Mammary epithelial cell (primary cell): ENCODE measurements at regions of chr15 and their contacts with region 1.

Region 1: GRCh38 chr15:80343554-80343992 is 60.6 kb upstream of the ARNT2 start:
- DNase-seq: no peak
- H3K4me3 ChIP-seq: no peak overlapping the region
- H3K27ac ChIP-seq: no peak overlapping the region
- H3K4me1 ChIP-seq: no peaks in the 10 kb centered on the region
- H3K27me3 ChIP-seq: no peaks in the 10 kb centered on the region
- CTCF ChIP-seq: no peak

Region 2: DNA sequence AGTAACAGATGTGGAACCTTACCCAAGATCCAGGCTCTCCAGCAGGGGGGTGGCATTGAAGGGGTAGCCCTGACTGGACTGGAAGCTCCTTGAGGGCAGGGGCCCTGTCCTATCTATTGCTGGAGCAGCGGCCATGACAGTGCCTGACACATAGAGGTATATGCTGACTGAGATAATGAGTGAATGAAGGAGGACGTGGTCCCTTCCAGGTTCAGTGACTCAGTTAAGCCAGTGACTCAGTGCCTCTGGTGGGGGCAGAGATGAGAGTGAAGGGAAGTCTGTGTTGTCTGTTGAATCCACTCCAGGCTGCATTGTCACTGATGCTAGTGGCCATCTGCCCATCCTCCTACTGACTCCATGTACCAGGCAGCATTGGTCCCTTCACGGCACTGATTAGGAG is 78.6 kb before region 1 on chr15:
- CTCF ChIA-PET with region 1: no interaction called
- dilution Hi-C with region 1: loop called (anchors 5 kb)
- in situ Hi-C with region 1: no loop called
- intact Hi-C with region 1: no loop called
- DNase-seq: peak; percentile 6
- H3K4me3 ChIP-seq: no peak overlapping the region
- H3K27ac ChIP-seq: no peak overlapping the region
- H3K4me1 ChIP-seq: no peaks in the 10 kb centered on the region
- H3K27me3 ChIP-seq: no peaks in the 10 kb centered on the region
- CTCF ChIP-seq: no peak

Region 3: GRCh38 chr15:80301472-80301871 is 42.1 kb before region 1 on chr15:
- CTCF ChIA-PET with region 1: no interaction called
- dilution Hi-C with region 1: no loop called
- in situ Hi-C with region 1: no loop called
- intact Hi-C with region 1: no loop called
- DNase-seq: no peak
- H3K4me3 ChIP-seq: no peak overlapping the region
- H3K27ac ChIP-seq: no peak overlapping the region
- H3K4me1 ChIP-seq: no peaks in the 10 kb centered on the region
- H3K27me3 ChIP-seq: peaks cover 3% of the 10 kb centered on the region
- CTCF ChIP-seq: no peak

Region 4: DNA sequence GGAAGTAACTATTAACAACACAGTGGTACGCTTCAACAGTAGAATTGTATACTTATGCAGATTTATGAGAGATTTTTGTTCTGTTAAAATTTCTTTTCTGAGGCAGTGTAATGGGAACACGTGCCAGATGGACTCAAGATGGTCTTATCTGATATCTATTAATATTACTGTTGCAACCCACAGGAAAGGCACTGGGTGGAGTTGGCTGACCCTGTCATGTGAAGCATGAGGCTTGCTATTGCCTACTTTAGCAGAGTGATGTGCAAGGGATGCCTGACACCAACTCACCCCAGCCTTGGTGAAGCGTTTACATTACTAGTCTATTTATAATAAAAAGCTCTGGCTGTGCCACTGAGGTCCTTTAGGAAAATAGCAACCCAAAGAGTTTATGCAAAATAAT is 40.9 kb after region 1 on chr15:
- CTCF ChIA-PET with region 1: no interaction called
- dilution Hi-C with region 1: loop called (anchors 5 kb)
- in situ Hi-C with region 1: no loop called
- intact Hi-C with region 1: no loop called
- DNase-seq: no peak
- H3K4me3 ChIP-seq: no peak overlapping the region
- H3K27ac ChIP-seq: no peak overlapping the region
- H3K4me1 ChIP-seq: no peaks in the 10 kb centered on the region
- H3K27me3 ChIP-seq: peaks cover 3% of the 10 kb centered on the region
- CTCF ChIP-seq: no peak

Region 5: GRCh38 chr15:80404057-80404715 is 60.6 kb after region 1 on chr15 and contains the start of gene ARNT2:
- CTCF ChIA-PET with region 1: no interaction called
- dilution Hi-C with region 1: loop called (anchors 5 kb)
- in situ Hi-C with region 1: no loop called
- intact Hi-C with region 1: no loop called
- DNase-seq: no peak
- H3K4me3 ChIP-seq: peak within 1 kb of the TSS in 2 of 3 experiments; percentile 33 to 45
- H3K27ac ChIP-seq: no peak within 1 kb of the TSS
- H3K4me1 ChIP-seq: peaks cover 4% of the 10 kb centered on the region
- H3K27me3 ChIP-seq: peaks cover 33% of the 10 kb centered on the region
- CTCF ChIP-seq: no peak
- total RNA-seq, gene ARNT2: 0.42 to 2.3 TPM